ENCODE measurements at regions of chr5 and their contacts with region 1.

Region 1: GRCh38 chr5:39376293-39376714 is 12.0 kb upstream of the C9 start:
- DNase-seq: peak; percentile 34 to 53
- H3K4me3 ChIP-seq: no peak overlapping the region
- H3K27ac ChIP-seq: no peak overlapping the region
- H3K4me1 ChIP-seq: no peaks in the 10 kb centered on the region
- H3K27me3 ChIP-seq: no peaks in the 10 kb centered on the region
- CTCF ChIP-seq: peak; percentile 70 to 74 (median 72)
- POLR2A ChIP-seq: no peak

Region 2: DNA sequence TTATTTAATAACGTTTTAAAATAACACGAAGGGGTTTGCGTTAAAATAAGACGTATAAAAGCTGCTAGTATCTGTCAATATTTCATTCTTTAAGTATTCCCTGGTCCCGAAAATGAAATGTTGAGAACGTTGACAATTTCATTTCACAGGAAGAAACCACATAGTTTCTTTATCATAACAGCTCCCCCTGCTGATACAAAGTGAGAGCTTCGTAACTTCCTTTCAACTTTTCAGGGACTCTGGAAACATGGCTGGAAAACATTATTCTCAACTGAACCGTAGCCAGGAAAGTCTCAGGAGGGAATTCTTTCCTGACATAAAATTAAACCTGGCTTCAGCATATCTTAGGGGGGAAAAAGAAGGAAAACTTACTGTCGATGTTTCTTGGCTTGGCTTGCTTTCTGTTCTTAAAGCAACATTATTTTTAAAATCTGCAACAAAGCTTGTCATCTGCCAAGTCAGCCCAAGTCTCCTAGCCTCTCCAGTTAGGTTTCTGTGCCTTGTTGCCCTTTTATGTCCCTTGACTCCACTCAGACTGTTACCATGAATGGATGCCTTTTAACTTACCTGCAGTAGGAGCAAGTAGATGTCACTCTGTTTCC is 171.3 kb after region 1 on chr5:
- intact Hi-C with region 1: loop called (anchors 5 kb)
- DNase-seq: peak; percentile 34 to 62
- H3K4me3 ChIP-seq: no peak overlapping the region
- H3K27ac ChIP-seq: no peak overlapping the region
- H3K4me1 ChIP-seq: no peaks in the 10 kb centered on the region
- H3K27me3 ChIP-seq: no peaks in the 10 kb centered on the region
- CTCF ChIP-seq: peak; percentile 54 to 83 (median 74)
- POLR2A ChIP-seq: no peak

Region 3: GRCh38 chr5:39560726-39561125 is 184.4 kb after region 1 on chr5:
- intact Hi-C with region 1: loop called (anchors 5 kb)
- DNase-seq: no peak
- H3K4me3 ChIP-seq: no peak overlapping the region
- H3K27ac ChIP-seq: no peak overlapping the region
- H3K4me1 ChIP-seq: no peaks in the 10 kb centered on the region
- H3K27me3 ChIP-seq: no peaks in the 10 kb centered on the region
- CTCF ChIP-seq: no peak
- POLR2A ChIP-seq: no peak

Measured in uterus (tissue), 4 donors.